ENCODE measurements at regions of chr6 and their contacts with region 1.

Region 1: DNA sequence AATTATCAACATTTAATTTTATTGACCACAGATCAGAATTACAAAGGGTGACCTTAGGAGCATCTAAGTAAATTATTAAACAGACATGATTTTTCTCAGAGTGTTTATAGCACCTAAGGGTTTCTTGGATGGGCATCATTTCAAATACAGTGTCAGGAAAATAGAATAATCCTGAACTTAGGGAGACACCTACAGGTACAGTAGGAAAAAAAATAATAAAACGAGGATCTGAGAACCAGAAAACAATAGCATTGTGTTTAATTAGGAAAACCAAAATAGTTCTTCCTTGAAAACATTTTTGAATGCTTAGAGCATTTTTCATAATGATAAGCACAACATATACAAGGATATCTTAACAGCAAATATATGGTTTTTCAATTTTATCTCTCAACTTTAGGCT is 39.2 kb downstream of the MMUT start:
- DNase-seq: no peak
- ATAC-seq: no peak
- H3K4me3 Mint-ChIP-seq: no peak overlapping the region
- H3K27ac Mint-ChIP-seq: no peak overlapping the region
- H3K4me1 Mint-ChIP-seq: no peaks in the 10 kb centered on the region
- H3K27me3 Mint-ChIP-seq: no peaks in the 10 kb centered on the region
- CTCF ChIP-seq: no peak

Region 2: DNA sequence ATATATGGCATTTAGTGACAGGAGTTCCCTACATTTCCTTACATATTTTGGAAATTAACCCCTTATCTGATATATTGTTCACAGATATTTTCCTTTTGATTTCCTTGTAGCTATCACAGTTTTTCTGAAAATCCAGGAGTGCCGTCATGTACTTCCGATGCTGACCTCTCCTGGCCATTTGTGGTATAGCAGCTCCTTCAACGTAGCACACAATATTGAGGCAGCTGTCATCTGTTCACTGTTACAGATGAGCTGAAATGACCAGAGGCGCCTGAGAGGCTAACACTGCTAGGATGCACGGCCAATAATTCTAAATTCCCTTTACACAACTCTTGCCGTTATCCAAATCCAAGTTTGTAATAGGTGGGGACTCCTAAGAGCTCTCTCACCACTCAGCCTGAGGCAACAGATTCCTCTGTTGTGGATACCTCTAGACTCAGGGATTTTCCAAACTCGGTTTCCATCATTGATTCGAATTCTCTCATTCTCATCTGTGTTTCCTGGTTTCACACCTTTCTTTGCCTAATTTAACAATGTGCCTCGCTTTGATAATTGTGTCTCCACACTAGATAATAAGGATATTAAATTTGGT is 13.8 kb before region 1 on chr6:
- CTCF ChIA-PET with region 1: interaction called, 12 read pairs
- POLR2A ChIA-PET with region 1: no interaction called
- intact Hi-C with region 1: no loop called
- DNase-seq: peak; percentile 81
- ATAC-seq: peak; percentile 84
- H3K4me3 Mint-ChIP-seq: no peak overlapping the region
- H3K27ac Mint-ChIP-seq: no peak overlapping the region
- H3K4me1 Mint-ChIP-seq: no peaks in the 10 kb centered on the region
- H3K27me3 Mint-ChIP-seq: peaks cover 1% of the 10 kb centered on the region
- CTCF ChIP-seq: peak; percentile 74

Measured in activated CD8-positive, alpha-beta T cell treated with anti-CD3 and anti-CD28 coated beads for 36 hours (primary cell).